Right ventricle myocardium superior (tissue), 1 donor: ENCODE measurements at regions of chr16 and their contacts with region 1.

Region 1: GRCh38 chr16:4200000-4200780 is 41.7 kb downstream of the SRL start:
- DNase-seq: peak; percentile 77
- ATAC-seq: peak; percentile 74

Region 2: DNA sequence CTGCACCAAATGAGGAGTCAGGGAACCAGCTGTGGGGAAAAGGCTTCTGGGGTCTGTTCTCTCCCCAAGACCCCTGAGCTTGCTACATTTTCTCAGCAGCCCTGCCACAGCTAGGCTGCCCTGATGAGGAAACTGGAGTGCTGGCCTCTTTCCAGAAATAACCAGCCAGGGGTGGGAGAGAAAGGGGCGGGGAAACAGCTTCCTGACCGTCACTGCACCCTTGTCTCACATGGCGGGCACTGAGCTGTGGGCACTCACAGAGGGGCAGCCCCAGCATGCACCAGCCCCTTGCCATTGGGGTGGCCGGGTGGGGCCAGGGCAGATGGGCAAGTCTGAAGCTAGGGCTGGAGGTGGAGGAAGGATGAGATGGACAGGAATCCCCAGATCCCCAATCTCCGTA is 38.8 kb after region 1 on chr16:
- intact Hi-C with region 1: loop called (anchors 5 kb)
- DNase-seq: no peak
- ATAC-seq: peak; percentile 23